IMR-90 (cell line): ENCODE measurements at regions of chr1 and their contacts with region 1.

Region 1: GRCh38 chr1:33914531-33914930 is 50.7 kb downstream of the HMGB4 start:
- DNase-seq: no peak
- ATAC-seq: no peak
- H3K4me3 ChIP-seq: no peak overlapping the region
- H3K27ac ChIP-seq: no peak overlapping the region
- H3K4me1 ChIP-seq: no peaks in the 10 kb centered on the region
- H3K27me3 ChIP-seq: no peaks in the 10 kb centered on the region
- CTCF ChIP-seq: no peak
- POLR2A ChIP-seq: no peak
- RAD21 ChIP-seq: no peak

Region 2: GRCh38 chr1:34690269-34690668 is 775.7 kb after region 1 on chr1:
- CTCF ChIA-PET with region 1: no interaction called
- POLR2A ChIA-PET with region 1: no interaction called
- dilution Hi-C with region 1: no loop called
- in situ Hi-C with region 1: no loop called
- intact Hi-C with region 1: loop called (anchors 5 kb)
- DNase-seq: no peak
- ATAC-seq: no peak
- H3K4me3 ChIP-seq: no peak overlapping the region
- H3K27ac ChIP-seq: no peak overlapping the region
- H3K4me1 ChIP-seq: no peaks in the 10 kb centered on the region
- H3K27me3 ChIP-seq: no peaks in the 10 kb centered on the region
- CTCF ChIP-seq: no peak
- POLR2A ChIP-seq: no peak
- RAD21 ChIP-seq: no peak